Mammary epithelial cell (primary cell): ENCODE measurements at regions of chr16 and their contacts with region 1.

Region 1: DNA sequence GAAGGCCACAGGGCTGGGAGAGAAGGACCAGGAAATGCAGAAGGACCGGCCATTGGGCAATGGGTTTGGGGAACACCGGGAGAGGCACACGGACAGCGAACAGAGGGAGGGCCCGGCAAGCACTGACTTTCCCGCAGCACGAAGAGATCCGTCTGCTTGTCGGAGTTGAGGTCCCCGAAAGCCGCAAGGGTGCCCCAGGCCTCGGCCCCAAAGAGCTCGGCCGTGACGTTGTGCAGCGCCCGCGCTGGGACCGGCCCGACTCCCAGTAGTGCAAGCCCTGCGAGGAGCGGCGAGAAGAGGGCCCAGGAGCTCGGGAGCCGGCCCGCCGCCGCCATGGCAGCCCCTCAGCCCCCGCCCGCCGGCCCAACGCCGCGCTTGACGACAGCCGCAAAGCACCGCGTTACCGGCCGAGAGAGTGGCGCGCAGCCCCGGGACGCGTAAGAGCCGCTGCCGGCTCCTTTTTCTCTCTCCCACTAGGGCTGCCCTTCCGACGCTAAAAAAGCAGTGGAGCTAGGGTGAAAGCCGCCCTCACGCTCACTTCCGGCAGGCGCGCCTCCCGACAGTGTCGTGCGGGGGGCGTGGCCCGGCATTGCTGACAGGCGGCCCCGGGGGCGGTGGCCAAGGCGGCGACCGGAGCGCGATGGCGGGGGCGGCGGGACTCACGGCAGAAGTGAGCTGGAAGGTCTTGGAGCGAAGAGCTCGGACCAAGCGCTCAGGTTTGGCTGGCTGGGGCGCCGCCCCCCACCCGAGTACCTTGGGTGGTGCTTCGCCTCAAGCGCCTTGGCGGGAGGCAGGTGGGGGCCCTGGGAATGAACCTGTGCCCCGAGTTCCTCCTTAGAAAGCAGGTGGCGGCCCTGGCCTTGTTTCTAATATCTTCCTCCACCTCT is at the starts of genes ITFG1 and PHKB:
- DNase-seq: peak; percentile 94
- H3K4me3 ChIP-seq: peak within 1 kb of the TSS; percentile 73 to 97 (median 95)
- H3K27ac ChIP-seq: peak within 1 kb of the TSS; percentile 91
- H3K4me1 ChIP-seq: peaks cover 27% of the 10 kb centered on the region
- H3K27me3 ChIP-seq: no peaks in the 10 kb centered on the region
- CTCF ChIP-seq: no peak
- total RNA-seq, gene ITFG1: 46.0 to 80.2 TPM
- total RNA-seq, gene PHKB: 57.4 to 100 TPM

Region 2: DNA sequence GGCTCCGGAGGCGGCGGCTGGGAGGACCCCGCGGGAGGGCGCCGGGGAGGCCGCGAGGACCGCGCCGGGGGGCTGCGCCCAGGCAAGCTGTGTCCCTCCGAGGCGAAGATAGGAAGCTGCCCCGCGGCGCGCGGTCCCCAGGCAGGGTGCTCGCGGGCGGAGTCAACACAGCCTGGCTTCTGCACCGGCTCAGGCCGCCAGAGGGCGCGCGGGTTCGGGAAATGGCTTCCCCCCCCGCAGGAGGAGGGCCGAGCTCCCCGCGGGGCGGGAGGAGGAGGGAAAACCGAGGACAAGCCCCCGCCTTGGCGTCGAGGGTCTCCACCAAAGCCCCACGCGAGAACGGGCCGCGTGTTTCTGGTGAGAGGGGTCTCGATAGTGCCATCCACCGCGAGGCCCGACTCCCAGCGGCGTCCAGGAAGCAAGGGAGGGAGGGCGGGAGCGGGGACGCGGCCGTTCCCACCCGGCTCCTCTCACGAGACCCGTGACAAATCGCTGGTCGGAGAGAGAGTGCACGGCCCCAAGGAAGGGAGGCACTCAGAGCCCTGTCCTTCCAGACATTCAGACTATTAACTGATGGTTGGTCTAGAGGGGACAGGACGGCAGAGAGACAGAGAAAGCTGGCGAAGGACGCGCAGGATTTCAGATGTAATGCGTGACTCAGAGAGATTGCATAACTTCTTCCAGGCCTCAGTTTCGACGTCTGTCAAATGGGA is 423.1 kb before region 1 on chr16:
- CTCF ChIA-PET with region 1: no interaction called
- dilution Hi-C with region 1: no loop called
- in situ Hi-C with region 1: no loop called
- intact Hi-C with region 1: loop called (anchors 5 kb)
- DNase-seq: peak; percentile 68
- H3K4me3 ChIP-seq: peak overlapping the region; percentile 63 to 80 (median 70)
- H3K27ac ChIP-seq: peak overlapping the region; percentile 26
- H3K4me1 ChIP-seq: peaks cover 4% of the 10 kb centered on the region
- H3K27me3 ChIP-seq: no peaks in the 10 kb centered on the region
- CTCF ChIP-seq: peak; percentile 76 to 94

Region 3: GRCh38 chr16:47475786-47476185 is 14.8 kb after region 1 on chr16:
- CTCF ChIA-PET with region 1: no interaction called
- dilution Hi-C with region 1: no loop called
- in situ Hi-C with region 1: no loop called
- intact Hi-C with region 1: loop called (anchors 2 kb)
- DNase-seq: peak; percentile 26
- H3K4me3 ChIP-seq: no peak overlapping the region
- H3K27ac ChIP-seq: no peak overlapping the region
- H3K4me1 ChIP-seq: peaks cover 9% of the 10 kb centered on the region
- H3K27me3 ChIP-seq: no peaks in the 10 kb centered on the region
- CTCF ChIP-seq: no peak

Region 4: GRCh38 chr16:47574091-47575054 is 113.4 kb after region 1 on chr16:
- CTCF ChIA-PET with region 1: no interaction called
- dilution Hi-C with region 1: no loop called
- in situ Hi-C with region 1: no loop called
- intact Hi-C with region 1: loop called (anchors 1 kb)
- DNase-seq: peak; percentile 93
- H3K4me3 ChIP-seq: peak overlapping the region in 2 of 3 experiments; percentile 19 to 26
- H3K27ac ChIP-seq: peak overlapping the region; percentile 85
- H3K4me1 ChIP-seq: peaks cover 25% of the 10 kb centered on the region
- H3K27me3 ChIP-seq: no peaks in the 10 kb centered on the region
- CTCF ChIP-seq: no peak